Heart right ventricle (tissue), 16 donors: ENCODE measurements at regions of chr6 and their contacts with region 1.

Region 1: GRCh38 chr6:17621003-17621402 is 20.9 kb downstream of the FAM8A1 start:
- DNase-seq: no peak
- ATAC-seq: no peak
- H3K4me3 ChIP-seq: no peak overlapping the region
- H3K27ac ChIP-seq: no peak overlapping the region
- H3K4me1 ChIP-seq: peaks cover 0 to 19% (median 4%) of the 10 kb centered on the region in 9 donors
- H3K27me3 ChIP-seq: no peaks in the 10 kb centered on the region
- CTCF ChIP-seq: no peak

Region 2: DNA sequence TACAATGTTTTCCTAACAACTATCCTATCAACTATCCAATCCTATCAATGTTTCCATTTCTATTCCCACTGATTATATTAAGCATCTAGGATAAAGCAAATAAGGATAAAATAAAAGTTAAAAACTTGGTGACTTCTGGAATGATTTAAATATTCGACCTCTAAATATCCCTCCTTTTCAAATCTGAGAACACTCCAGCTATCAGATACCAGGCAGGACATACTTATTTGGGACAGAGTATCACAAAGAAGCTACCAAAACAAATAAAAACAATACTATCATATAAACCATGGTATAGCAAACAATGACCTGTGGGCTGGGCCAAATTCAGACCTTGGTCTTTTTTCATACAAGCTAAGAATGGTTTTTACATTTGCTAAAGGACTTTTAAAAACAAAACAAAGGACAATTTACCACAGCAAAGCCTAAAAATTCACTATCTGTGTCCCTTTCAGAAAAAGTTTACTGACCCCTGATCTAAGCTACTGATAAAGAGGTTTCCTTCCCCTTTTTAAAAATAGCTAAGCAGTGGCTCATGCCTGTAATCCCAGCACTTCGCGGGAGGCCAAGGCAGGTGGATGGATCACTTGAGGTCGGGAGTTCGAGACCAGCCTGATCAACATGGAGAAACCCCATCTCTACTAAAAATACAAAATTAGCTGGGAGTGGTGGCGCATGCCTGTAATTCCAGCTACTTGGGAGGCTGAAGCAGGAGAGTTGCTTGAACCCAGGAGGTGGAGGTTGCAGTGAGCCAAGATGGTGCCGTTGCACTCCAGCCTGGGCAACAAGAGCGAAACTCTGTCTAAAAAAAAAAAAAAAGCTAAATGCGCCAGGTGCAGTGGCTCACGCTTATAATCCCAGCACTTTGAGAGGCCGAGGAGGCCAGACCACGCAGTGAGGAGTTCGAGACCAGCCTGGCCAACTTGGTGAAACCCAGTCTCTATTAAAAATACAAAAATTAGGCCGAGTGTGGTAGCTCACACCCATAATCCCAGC is 79.7 kb after region 1 on chr6:
- intact Hi-C with region 1: loop called in 1 of 10 experiments (anchors 5 kb)
- DNase-seq: no peak
- ATAC-seq: no peak
- H3K4me3 ChIP-seq: no peak overlapping the region
- H3K27ac ChIP-seq: peak overlapping the region in 7 of 10 donors; percentile 4 to 49 (median 38)
- H3K4me1 ChIP-seq: peaks cover 3 to 84% (median 53%) of the 10 kb centered on the region in 9 donors
- H3K27me3 ChIP-seq: no peaks in the 10 kb centered on the region
- CTCF ChIP-seq: no peak